ENCODE measurements at regions of chr14 and their contacts with region 1.

Region 1: GRCh38 chr14:55085060-55085660 is 33.7 kb downstream of the MAPK1IP1L start:
- DNase-seq: no peak
- H3K4me3 ChIP-seq: no peak overlapping the region
- H3K27ac ChIP-seq: no peak overlapping the region
- H3K4me1 ChIP-seq: no peaks in the 10 kb centered on the region
- H3K27me3 ChIP-seq: no peaks in the 10 kb centered on the region
- CTCF ChIP-seq: no peak
- POLR2A ChIP-seq: no peak

Region 2: GRCh38 chr14:54839701-54840119 is 245.4 kb before region 1 on chr14:
- intact Hi-C with region 1: no loop called
- DNase-seq: peak; percentile 20 to 53
- H3K4me3 ChIP-seq: no peak overlapping the region
- H3K27ac ChIP-seq: no peak overlapping the region
- H3K4me1 ChIP-seq: no peaks in the 10 kb centered on the region
- H3K27me3 ChIP-seq: no peaks in the 10 kb centered on the region
- CTCF ChIP-seq: no peak
- POLR2A ChIP-seq: no peak

Region 3: DNA sequence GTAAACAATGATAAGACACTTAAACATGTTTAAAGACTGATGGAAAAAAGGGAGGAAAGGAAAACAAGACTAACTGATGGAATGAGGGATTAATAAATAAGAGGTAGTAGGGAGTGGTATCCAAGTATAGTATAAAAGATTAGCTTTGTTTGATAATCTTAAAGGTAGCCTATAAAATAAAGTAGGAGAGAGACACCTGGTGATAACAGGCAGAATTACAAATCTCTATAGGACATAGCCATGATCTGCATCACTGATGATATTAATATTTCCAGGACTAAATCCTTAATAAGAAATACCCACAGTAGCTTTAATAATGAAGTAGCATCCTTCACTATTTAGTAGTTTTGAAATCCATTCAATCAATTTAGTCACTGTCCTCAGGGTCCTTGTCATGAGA is 75.8 kb after region 1 on chr14:
- intact Hi-C with region 1: loop called (anchors 10 kb)
- DNase-seq: no peak
- H3K4me3 ChIP-seq: no peak overlapping the region
- H3K27ac ChIP-seq: no peak overlapping the region
- H3K4me1 ChIP-seq: no peaks in the 10 kb centered on the region
- H3K27me3 ChIP-seq: no peaks in the 10 kb centered on the region
- CTCF ChIP-seq: peak; percentile 61 to 77 (median 68)
- POLR2A ChIP-seq: no peak